WTC11 (cell line): ENCODE measurements at regions of chr3 and their contacts with region 1.

Region 1: GRCh38 chr3:48739955-48740823 is 23.2 kb upstream of the IP6K2 start:
- DNase-seq: peak; percentile 90
- ATAC-seq: peak; percentile 99
- H3K4me3 Mint-ChIP-seq: no peak overlapping the region
- H3K27ac Mint-ChIP-seq: no peak overlapping the region
- H3K4me1 Mint-ChIP-seq: no peaks in the 10 kb centered on the region
- H3K27me3 Mint-ChIP-seq: no peaks in the 10 kb centered on the region; the same call in 1 of the 2 replicates
- CTCF ChIP-seq: peak; percentile 77

Region 2: DNA sequence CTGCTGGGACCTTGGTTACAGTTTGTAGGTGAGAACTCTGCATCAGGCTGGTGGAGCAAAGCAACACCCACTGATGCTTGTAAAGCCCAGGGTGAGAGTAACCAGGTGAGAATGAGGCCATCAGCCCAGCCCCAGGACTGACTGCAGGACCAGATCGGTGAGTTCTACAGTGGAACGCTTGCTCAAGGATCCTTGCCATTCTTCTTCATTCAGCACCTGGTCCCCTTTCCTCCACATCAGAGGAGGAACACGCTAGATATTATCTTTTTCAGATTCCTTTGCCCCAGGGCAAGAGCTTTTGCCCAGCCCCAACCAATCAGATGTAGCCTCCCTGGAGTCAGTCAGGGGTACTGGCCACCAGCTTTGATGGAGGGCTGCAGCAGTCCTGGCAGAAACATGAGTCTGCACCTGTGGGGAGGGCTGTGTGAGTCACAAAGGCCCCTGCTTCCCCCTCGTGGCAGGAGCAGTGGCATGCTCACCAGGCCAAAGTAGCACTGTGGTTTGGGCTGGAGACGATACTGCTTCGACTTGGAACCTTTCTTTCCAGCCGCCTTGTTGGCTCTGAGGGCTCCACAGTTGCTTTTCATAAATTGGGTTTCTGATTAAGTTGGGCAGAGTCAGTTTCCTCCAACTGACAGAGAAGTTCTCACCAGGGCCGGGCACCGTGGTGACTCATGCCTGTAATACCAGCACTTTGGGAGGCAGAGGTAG is 232.7 kb before region 1 on chr3:
- CTCF ChIA-PET with region 1: no interaction called
- POLR2A ChIA-PET with region 1: no interaction called
- DNase-seq: peak; percentile 84
- ATAC-seq: peak; percentile 85
- H3K4me3 Mint-ChIP-seq: no peak overlapping the region
- H3K27ac Mint-ChIP-seq: peak overlapping the region; percentile 90
- H3K4me1 Mint-ChIP-seq: peaks cover 36% of the 10 kb centered on the region
- H3K27me3 Mint-ChIP-seq: no peaks in the 10 kb centered on the region; the same call in none of the 2 replicates
- CTCF ChIP-seq: 0 out of 2 replicates have a peak, but pooled peaks have one; percentile 17

Region 3: GRCh38 chr3:48685602-48686511 is 54.3 kb before region 1 on chr3 and contains the start of gene NCKIPSD:
- CTCF ChIA-PET with region 1: interaction called, 14 read pairs
- POLR2A ChIA-PET with region 1: no interaction called
- DNase-seq: peak; percentile 91
- ATAC-seq: peak; percentile 88
- H3K4me3 Mint-ChIP-seq: peak within 1 kb of the TSS; percentile 89
- H3K27ac Mint-ChIP-seq: peak within 1 kb of the TSS; percentile 27
- H3K4me1 Mint-ChIP-seq: peaks cover 16% of the 10 kb centered on the region
- H3K27me3 Mint-ChIP-seq: no peaks in the 10 kb centered on the region
- CTCF ChIP-seq: peak; percentile 82
- total RNA-seq, gene NCKIPSD: 40.1 to 50.1 TPM (median 47.1 TPM) in 3 replicates

Region 4: GRCh38 chr3:48727511-48727910 is 12.7 kb before region 1 on chr3:
- CTCF ChIA-PET with region 1: interaction called, 13 read pairs
- POLR2A ChIA-PET with region 1: no interaction called
- DNase-seq: no peak
- ATAC-seq: no peak
- H3K4me3 Mint-ChIP-seq: no peak overlapping the region
- H3K27ac Mint-ChIP-seq: no peak overlapping the region
- H3K4me1 Mint-ChIP-seq: no peaks in the 10 kb centered on the region
- H3K27me3 Mint-ChIP-seq: peaks cover 17% of the 10 kb centered on the region
- CTCF ChIP-seq: no peak

Region 5: DNA sequence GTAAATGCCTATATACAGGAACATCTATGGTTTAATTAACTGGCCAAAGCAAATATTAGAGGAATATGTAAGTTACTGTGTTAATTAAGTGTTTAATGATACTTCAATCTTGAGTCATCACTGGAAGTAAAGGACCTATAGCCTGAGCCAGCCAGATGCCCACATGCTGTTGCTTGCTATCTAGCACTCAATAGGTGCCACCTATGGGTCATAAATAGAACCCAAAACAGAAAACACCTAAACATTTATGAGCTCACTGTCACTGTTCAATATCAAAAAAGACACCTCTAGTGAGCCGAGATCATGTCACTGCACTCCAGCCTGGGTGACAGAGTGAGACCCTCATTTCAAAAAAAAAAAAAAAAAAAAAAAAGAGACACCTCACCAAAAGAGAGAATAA is 25.2 kb after region 1 on chr3:
- CTCF ChIA-PET with region 1: interaction called, 20 read pairs
- POLR2A ChIA-PET with region 1: no interaction called
- DNase-seq: no peak
- ATAC-seq: no peak
- H3K4me3 Mint-ChIP-seq: no peak overlapping the region
- H3K27ac Mint-ChIP-seq: no peak overlapping the region
- H3K4me1 Mint-ChIP-seq: peaks cover 3% of the 10 kb centered on the region; the same call in 1 of the 2 replicates
- H3K27me3 Mint-ChIP-seq: no peaks in the 10 kb centered on the region
- CTCF ChIP-seq: no peak

Region 6: GRCh38 chr3:48847504-48848423 is 107.6 kb after region 1 on chr3 and contains the start of gene PRKAR2A:
- CTCF ChIA-PET with region 1: interaction called, 10 read pairs
- POLR2A ChIA-PET with region 1: no interaction called
- DNase-seq: peak; percentile 85
- ATAC-seq: peak; percentile 85
- H3K4me3 Mint-ChIP-seq: peak within 1 kb of the TSS; percentile 82
- H3K27ac Mint-ChIP-seq: peak within 1 kb of the TSS; percentile 78; the same call in 1 of the 2 replicates
- H3K4me1 Mint-ChIP-seq: peaks cover 18% of the 10 kb centered on the region
- H3K27me3 Mint-ChIP-seq: peaks cover 17% of the 10 kb centered on the region
- CTCF ChIP-seq: no peak
- total RNA-seq, gene PRKAR2A: 45.1 to 57.2 TPM (median 47.2 TPM) in 3 replicates

Region 7: GRCh38 chr3:48952510-48953118 is 212.4 kb after region 1 on chr3:
- CTCF ChIA-PET with region 1: interaction called, 11 read pairs
- POLR2A ChIA-PET with region 1: no interaction called
- DNase-seq: peak; percentile 78
- ATAC-seq: peak; percentile 99
- H3K4me3 Mint-ChIP-seq: no peak overlapping the region
- H3K27ac Mint-ChIP-seq: peak overlapping the region; percentile 3
- H3K4me1 Mint-ChIP-seq: peaks cover 9% of the 10 kb centered on the region
- H3K27me3 Mint-ChIP-seq: no peaks in the 10 kb centered on the region
- CTCF ChIP-seq: no peak